H1 (cell line): ENCODE measurements at regions of chr4 and their contacts with region 1.

Region 1: DNA sequence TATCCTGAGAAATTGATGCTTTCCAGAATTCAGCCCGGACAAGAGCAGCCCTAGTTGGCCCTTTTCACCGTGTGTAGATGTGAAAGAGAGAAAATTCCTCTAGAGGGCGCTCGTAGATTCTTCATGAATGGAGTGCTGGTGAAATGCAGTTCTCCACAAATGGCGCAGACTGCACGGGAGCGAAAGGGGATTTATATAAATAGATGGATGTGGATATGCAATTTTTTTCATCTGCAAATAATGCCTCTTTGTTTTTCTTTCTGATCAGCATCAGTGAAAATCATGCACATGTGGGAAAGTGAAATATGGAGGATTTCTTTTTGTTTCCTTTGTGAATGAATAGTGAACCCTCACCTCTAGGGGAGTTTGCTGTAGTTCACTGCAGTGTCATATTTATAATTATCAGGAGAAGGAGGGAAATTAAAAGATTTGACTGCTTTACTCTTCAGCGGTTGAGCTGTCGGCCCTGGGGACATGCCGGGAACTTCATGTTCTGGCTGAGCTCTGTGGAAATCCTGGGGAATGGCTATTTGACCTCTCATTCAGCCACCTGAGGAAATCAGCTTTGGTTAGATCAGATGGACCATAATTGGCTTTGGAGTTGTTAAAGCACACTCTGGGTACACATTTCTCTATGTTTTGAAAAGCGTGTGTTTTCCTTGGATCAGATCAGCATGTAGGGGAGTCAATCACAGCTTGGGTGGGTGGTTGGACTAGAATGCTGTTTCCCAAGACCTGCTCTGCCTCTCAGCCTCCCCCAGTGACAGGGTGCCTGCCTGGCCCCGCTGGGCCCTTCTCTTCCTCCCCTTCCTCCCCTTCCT is 115.0 kb upstream of the SHISA3 start:
- DNase-seq: peak in 1 of 2 experiments; percentile 61
- H3K4me3 ChIP-seq: no peak overlapping the region
- H3K27ac ChIP-seq: no peak overlapping the region
- H3K4me1 ChIP-seq: peaks cover 2 to 4% (median 3%) of the 10 kb centered on the region in 4 experiments; a peak in 5 of 7 replicates
- H3K27me3 ChIP-seq: no peaks in the 10 kb centered on the region
- CTCF ChIP-seq: peak in 2 of 3 experiments; percentile 70 to 85; a peak in 3 of 4 replicates
- EP300 ChIP-seq: no peak
- POLR2A ChIP-seq: no peak
- RAD21 ChIP-seq: peak; percentile 88 to 96

Region 2: GRCh38 chr4:42262701-42263490 is 19.4 kb before region 1 on chr4:
- CTCF ChIA-PET with region 1: interaction called, 33 read pairs
- POLR2A ChIA-PET with region 1: no interaction called
- DNase-seq: no peak
- H3K4me3 ChIP-seq: no peak overlapping the region
- H3K27ac ChIP-seq: no peak overlapping the region
- H3K4me1 ChIP-seq: no peaks in the 10 kb centered on the region; a peak in 1 of 7 replicates
- H3K27me3 ChIP-seq: no peaks in the 10 kb centered on the region
- CTCF ChIP-seq: no peak
- EP300 ChIP-seq: no peak
- POLR2A ChIP-seq: no peak
- RAD21 ChIP-seq: no peak

Region 3: DNA sequence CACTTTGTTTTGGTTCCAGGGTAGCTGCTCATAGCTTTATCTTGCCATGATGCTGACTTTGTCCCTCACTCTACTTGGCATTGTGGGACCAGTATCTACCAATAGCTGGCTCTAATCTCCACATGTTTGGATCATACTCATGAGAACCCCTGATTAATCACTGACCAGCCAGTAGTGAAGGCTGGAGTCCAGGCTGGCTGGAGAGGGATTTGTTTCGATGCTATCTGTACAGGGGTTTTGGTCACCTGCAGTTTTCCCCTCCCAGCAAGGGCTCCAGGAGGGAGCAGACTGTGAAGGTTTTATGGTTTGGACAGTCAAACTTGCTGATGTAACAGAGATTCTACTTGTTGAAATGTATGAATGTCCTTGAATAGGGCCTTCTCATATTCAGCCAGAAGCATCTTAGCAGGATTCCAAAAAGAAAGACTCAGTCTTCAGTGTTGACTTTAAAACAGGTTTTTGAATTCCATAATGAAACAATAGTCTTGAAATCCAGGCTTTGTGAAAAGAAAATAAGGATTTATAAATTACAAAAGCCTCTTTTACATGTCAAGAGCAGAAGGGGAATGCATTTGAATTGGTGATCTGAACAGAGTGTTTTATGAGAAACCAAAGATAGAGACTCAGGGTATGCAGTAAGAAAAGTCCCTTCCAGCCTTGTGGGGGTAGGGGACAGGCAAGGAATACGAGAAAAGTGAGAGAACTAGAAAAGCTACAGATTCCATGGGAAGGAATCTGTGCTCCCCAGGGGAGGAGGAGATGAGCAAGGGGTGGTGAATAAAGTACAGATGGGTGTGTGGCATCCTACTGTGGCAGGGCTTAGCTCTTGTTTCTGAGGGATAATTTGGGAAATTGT is 11.9 kb after region 1 on chr4:
- CTCF ChIA-PET with region 1: interaction called, 56 read pairs
- POLR2A ChIA-PET with region 1: interaction called, 3 read pairs
- DNase-seq: no peak
- H3K4me3 ChIP-seq: peak overlapping the region in 1 of 4 experiments; percentile 9; a peak in 1 of 8 replicates
- H3K27ac ChIP-seq: peak overlapping the region; percentile 60; the same call in 1 of the 2 replicates
- H3K4me1 ChIP-seq: peaks cover 6 to 22% (median 19%) of the 10 kb centered on the region in 4 experiments; a peak in 6 of 7 replicates
- H3K27me3 ChIP-seq: no peaks in the 10 kb centered on the region
- CTCF ChIP-seq: no peak
- EP300 ChIP-seq: peak in 1 of 2 experiments; percentile 67; a peak in 1 of 3 replicates
- POLR2A ChIP-seq: no peak
- RAD21 ChIP-seq: peak in 1 of 2 experiments; percentile 14; a peak in 1 of 4 replicates

Region 4: GRCh38 chr4:42313872-42314271 is 31.6 kb after region 1 on chr4:
- CTCF ChIA-PET with region 1: interaction called, 11 read pairs
- POLR2A ChIA-PET with region 1: no interaction called
- DNase-seq: no peak
- H3K4me3 ChIP-seq: peak overlapping the region in 1 of 4 experiments; percentile 39; a peak in 1 of 8 replicates
- H3K27ac ChIP-seq: peak overlapping the region; percentile 1; the same call in 1 of the 2 replicates
- H3K4me1 ChIP-seq: peaks cover 11 to 24% (median 13%) of the 10 kb centered on the region in 4 experiments; a peak in 6 of 7 replicates
- H3K27me3 ChIP-seq: no peaks in the 10 kb centered on the region
- CTCF ChIP-seq: 0 out of 4 replicates have a peak, but pooled peaks of 1 of the 3 experiments have one; percentile 8
- EP300 ChIP-seq: no peak
- POLR2A ChIP-seq: no peak
- RAD21 ChIP-seq: no peak; a peak in 1 of 4 replicates

Region 5: GRCh38 chr4:42331914-42332368 is 49.6 kb after region 1 on chr4:
- CTCF ChIA-PET with region 1: interaction called, 22 read pairs
- POLR2A ChIA-PET with region 1: no interaction called
- DNase-seq: no peak
- H3K4me3 ChIP-seq: no peak overlapping the region
- H3K27ac ChIP-seq: no peak overlapping the region
- H3K4me1 ChIP-seq: no peaks in the 10 kb centered on the region
- H3K27me3 ChIP-seq: no peaks in the 10 kb centered on the region
- CTCF ChIP-seq: no peak
- EP300 ChIP-seq: no peak
- POLR2A ChIP-seq: no peak
- RAD21 ChIP-seq: no peak

Region 6: DNA sequence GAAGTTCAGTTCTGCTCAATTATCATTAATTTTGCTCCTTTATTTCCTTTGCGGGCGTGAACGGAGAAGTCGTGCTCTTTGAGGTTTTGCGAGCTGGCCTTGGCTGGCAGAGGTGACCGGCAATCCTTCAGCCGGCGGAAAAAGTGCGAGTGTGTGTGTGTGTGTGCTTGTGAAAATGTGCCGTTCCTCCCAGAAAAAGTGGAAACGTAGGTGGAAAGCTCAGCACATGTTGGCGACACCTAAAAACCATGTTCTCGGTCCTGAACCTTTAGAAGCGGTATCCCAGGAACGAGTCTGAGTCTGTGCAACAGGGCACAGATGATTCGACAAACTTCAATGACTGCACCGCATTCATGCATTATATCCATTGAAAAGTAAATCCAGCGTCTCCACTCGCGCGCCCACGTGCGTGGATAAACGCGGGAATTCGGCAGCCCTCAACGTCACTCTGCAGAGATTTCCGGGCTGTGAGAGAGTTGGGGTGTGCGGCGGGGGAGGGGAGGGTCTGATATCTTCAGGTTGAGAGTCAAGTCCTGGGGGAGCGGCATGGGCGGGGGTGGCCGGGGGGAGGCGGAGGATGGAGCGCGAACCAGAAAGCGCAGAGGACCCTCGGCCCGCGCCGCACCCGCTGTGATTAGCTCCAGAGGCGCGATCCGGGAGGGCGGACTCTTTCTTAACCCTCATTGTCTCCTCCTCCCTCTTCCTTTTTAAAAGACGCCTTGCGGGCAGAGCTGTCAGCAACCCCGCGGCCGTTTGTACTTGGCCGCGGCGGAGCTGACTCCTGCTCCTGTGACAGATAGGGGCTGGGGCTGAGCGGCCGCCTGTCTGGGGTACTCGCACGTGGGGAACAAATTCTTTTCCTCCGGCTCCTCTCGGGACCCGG is 114.7 kb after region 1 on chr4 and contains the start of gene SHISA3:
- CTCF ChIA-PET with region 1: interaction called, 22 read pairs
- POLR2A ChIA-PET with region 1: no interaction called
- DNase-seq: peak in 1 of 2 experiments; percentile 75
- H3K4me3 ChIP-seq: peak within 1 kb of the TSS; percentile 45 to 66 (median 58)
- H3K27ac ChIP-seq: no peak within 1 kb of the TSS
- H3K4me1 ChIP-seq: peaks cover 4 to 22% (median 12%) of the 10 kb centered on the region in 4 experiments; a peak in 6 of 7 replicates
- H3K27me3 ChIP-seq: peaks cover 19 to 65% (median 57%) of the 10 kb centered on the region in 4 experiments
- CTCF ChIP-seq: no peak
- EP300 ChIP-seq: no peak
- POLR2A ChIP-seq: no peak
- RAD21 ChIP-seq: no peak
- total RNA-seq, gene SHISA3: 2.0 and 2.2 TPM in 2 replicates